PC-9 (cell line): ENCODE measurements at regions of chr2 and their contacts with region 1.

Region 1: DNA sequence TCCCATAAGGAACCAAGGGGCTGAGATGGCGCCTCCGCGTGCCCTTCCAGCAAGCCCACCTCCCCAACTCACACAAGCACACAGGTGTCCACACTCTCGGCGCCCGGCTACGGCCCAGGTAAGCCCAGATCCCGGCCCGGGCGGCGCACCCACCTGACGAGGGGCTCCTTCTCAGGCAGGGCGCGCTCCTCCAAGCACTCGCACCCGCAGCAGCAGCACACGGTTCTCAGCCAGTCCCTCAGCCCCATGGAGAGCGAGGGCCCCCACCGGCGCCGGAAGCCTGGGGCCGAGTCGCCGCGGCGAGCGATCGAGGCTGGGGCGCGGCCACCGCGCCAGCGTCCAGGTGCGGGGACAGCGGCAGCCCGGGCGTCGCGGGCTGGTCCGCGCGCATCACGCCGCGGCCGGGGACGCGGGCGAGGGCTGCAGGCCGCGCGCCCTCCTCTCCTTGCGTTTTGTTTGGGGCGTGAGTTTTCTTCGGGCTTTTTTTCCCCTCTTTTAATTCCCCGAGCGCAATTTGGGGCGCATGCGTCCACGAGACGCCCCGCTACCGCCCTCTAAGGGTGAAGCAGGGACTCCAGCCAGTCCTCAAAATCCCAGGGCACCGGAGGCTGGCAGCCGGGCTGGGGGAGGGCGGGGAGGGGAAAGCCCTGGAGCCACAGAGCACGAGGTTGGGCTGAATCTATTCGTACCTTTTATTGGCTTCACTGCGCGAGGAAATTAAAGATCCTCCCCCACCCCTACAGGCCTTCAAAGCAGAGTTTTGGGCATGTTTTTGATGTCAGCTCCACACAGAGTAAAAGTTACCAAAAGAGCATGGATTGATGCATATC is at the start of gene MREG:
- DNase-seq: peak; percentile 83 to 86
- H3K4me3 ChIP-seq: peak within 1 kb of the TSS; percentile 83
- H3K27ac ChIP-seq: peak within 1 kb of the TSS; percentile 97
- H3K4me1 ChIP-seq: peaks cover 30% of the 10 kb centered on the region
- H3K27me3 ChIP-seq: no peaks in the 10 kb centered on the region
- CTCF ChIP-seq: peak; percentile 88
- total RNA-seq, gene MREG: 23.0 and 27.5 TPM in 2 replicates

Region 2: DNA sequence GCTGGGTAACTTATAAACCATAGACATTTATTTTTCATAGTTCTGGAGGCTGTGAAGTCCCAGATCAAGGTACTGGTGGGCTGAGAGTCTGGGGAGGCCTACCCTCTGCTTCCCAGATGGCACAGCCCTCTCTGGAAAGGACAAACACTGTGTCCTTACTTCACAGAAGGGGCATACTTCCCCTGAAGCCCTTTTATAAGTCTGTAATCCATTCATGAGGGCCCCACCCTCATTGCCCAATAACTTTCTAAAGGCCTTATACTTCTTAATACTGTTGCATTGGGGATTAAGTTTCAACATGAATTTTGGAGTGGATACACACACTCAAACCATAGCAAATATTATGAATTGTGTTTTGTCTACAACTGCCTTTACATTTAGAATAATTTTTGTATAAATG is 665.4 kb before region 1 on chr2:
- CTCF ChIA-PET with region 1: no interaction called
- POLR2A ChIA-PET with region 1: no interaction called
- intact Hi-C with region 1: no loop called
- DNase-seq: no peak
- H3K4me3 ChIP-seq: no peak overlapping the region
- H3K27ac ChIP-seq: no peak overlapping the region
- H3K4me1 ChIP-seq: no peaks in the 10 kb centered on the region
- H3K27me3 ChIP-seq: no peaks in the 10 kb centered on the region
- CTCF ChIP-seq: no peak

Region 3: DNA sequence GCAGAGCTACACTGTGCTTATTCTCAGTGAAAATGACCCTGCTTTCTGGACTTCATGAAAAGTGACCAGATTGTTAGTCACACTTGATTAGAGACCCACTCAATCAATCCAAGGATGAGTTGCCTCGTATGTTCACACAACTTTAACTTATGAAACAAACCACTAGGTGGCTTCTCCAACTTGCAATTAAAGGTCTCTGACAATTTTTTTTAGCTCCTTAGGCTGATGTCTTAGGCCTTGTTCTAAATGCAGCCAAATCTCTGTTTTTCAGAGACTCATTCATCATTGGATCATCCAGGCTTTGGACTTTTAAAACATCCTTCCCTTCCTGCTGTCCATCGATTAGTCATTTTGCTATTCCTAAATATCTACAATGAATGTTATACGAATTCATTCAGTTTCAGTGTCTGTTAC is 63.3 kb before region 1 on chr2:
- CTCF ChIA-PET with region 1: interaction called, 3 read pairs
- POLR2A ChIA-PET with region 1: interaction called, 4 read pairs
- intact Hi-C with region 1: loop called (anchors 2 kb)
- DNase-seq: peak; percentile 5 to 61
- H3K4me3 ChIP-seq: no peak overlapping the region
- H3K27ac ChIP-seq: no peak overlapping the region
- H3K4me1 ChIP-seq: no peaks in the 10 kb centered on the region; the same call in 1 of the 2 replicates
- H3K27me3 ChIP-seq: no peaks in the 10 kb centered on the region
- CTCF ChIP-seq: peak; percentile 88

Region 4: GRCh38 chr2:215973954-215974702 is 39.2 kb before region 1 on chr2:
- CTCF ChIA-PET with region 1: no interaction called
- POLR2A ChIA-PET with region 1: interaction called, 3 read pairs
- intact Hi-C with region 1: loop called (anchors 5 kb)
- DNase-seq: peak; percentile 46 to 95
- H3K4me3 ChIP-seq: peak overlapping the region; percentile 24; the same call in 1 of the 2 replicates
- H3K27ac ChIP-seq: peak overlapping the region; percentile 82
- H3K4me1 ChIP-seq: peaks cover 59% of the 10 kb centered on the region
- H3K27me3 ChIP-seq: no peaks in the 10 kb centered on the region
- CTCF ChIP-seq: no peak

Region 5: GRCh38 chr2:215982080-215982875 is 31.0 kb before region 1 on chr2:
- CTCF ChIA-PET with region 1: no interaction called
- POLR2A ChIA-PET with region 1: interaction called, 3 read pairs
- intact Hi-C with region 1: loop called (anchors 1 kb)
- DNase-seq: peak; percentile 81 to 100
- H3K4me3 ChIP-seq: peak overlapping the region; percentile 26; the same call in 1 of the 2 replicates
- H3K27ac ChIP-seq: peak overlapping the region; percentile 98
- H3K4me1 ChIP-seq: peaks cover 63% of the 10 kb centered on the region
- H3K27me3 ChIP-seq: no peaks in the 10 kb centered on the region
- CTCF ChIP-seq: no peak